ENCODE measurements at regions of chr13 and their contacts with region 1.

Region 1: DNA sequence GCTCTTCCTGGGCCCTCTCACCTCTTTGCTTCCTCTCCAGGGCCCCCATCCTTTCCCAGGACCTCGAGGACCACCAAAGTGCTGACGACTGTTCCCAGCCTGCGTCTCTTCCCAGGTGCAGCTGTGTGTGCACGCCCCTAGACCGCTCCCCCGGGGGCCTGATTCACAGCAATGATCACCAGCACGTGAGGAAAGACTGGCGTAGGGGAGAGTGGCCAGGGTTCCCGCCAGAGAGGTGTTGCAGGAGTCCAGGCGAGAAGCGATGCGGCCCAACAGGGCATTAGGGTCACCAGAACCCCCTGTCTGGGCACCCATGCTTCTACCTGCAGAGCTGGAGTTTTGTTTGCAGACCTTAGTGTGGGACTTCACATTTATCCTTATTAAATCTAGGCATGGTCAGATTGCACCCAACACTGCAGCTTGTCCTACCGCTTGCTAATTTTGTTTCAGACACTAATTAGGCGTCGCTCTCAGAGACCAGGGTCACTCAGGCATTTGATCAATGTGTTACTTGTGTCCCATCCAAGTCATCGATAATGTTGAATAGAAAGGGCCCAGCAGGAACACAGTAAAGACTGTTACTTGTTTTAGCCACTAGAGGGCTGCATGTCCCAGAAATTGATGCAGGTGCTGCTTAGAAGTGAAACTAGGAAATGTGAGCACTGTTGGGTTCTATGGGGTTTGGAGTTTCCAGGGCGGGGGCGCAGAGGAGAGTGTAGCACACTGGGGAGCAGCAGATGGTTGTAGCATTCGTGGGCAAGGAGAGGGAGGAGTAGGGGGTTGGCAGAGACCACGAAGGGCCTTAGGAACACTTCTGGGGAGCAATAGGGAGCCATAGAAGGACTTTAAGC is 53.2 kb downstream of the CDADC1 start:
- DNase-seq: peak in 8 of 9 donors; percentile 67 to 82 (median 75)
- ATAC-seq: peak; percentile 96
- H3K4me3 ChIP-seq: peak overlapping the region; percentile 67
- H3K4me3 Mint-ChIP-seq: peak overlapping the region; percentile 63 to 90 (median 80)
- H3K27ac ChIP-seq: no peak overlapping the region
- H3K27ac Mint-ChIP-seq: peak overlapping the region; percentile 16 to 82 (median 71)
- H3K4me1 ChIP-seq: no peaks in the 10 kb centered on the region
- H3K4me1 Mint-ChIP-seq: peaks cover 8 to 28% (median 14%) of the 10 kb centered on the region in 7 donors
- H3K27me3 ChIP-seq: no peaks in the 10 kb centered on the region
- H3K27me3 Mint-ChIP-seq: no peaks in the 10 kb centered on the region

Region 2: GRCh38 chr13:48222358-48223301 is 1078.3 kb before region 1 on chr13:
- CTCF ChIA-PET with region 1: no interaction called
- POLR2A ChIA-PET with region 1: no interaction called
- intact Hi-C with region 1: no loop called
- DNase-seq: peak in 2 of 9 donors; percentile 25 to 30
- ATAC-seq: peak; percentile 58
- H3K4me3 ChIP-seq: peak overlapping the region; percentile 9
- H3K4me3 Mint-ChIP-seq: peak overlapping the region; percentile 48 to 91 (median 78)
- H3K27ac ChIP-seq: peak overlapping the region; percentile 83
- H3K27ac Mint-ChIP-seq: peak overlapping the region; percentile 38 to 99 (median 97)
- H3K4me1 ChIP-seq: peaks cover 40 to 60% of the 10 kb centered on the region in 2 donors
- H3K4me1 Mint-ChIP-seq: peaks cover 41 to 88% (median 74%) of the 10 kb centered on the region in 7 donors
- H3K27me3 ChIP-seq: no peaks in the 10 kb centered on the region
- H3K27me3 Mint-ChIP-seq: peaks cover 0 to 32% (median 0%) of the 10 kb centered on the region in 5 donors

Region 3: DNA sequence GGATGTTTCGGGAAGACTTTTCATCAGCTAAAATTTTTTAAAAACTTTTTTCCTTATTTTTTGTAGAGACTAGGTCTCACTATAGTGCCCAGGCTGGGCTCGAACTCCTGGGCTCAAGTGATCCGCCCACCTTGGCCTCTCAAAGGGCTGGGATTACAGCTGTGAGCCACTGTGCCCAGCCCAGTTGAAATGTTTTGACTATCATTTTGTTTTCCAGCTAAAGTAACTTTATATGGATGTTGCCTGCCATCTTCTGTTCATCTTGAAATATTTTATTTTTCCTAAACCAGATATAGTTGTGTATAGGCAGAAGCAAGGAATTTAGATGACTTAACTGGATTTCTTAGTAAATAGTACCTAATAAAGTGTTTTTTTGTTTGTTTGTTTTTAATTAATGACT is 135.9 kb after region 1 on chr13:
- CTCF ChIA-PET with region 1: no interaction called
- POLR2A ChIA-PET with region 1: no interaction called
- intact Hi-C with region 1: loop called in 1 of 2 experiments (anchors 1 kb)
- DNase-seq: peak in 3 of 9 donors; percentile 15 to 32 (median 27)
- ATAC-seq: no peak
- H3K4me3 ChIP-seq: no peak overlapping the region
- H3K4me3 Mint-ChIP-seq: no peak overlapping the region
- H3K27ac ChIP-seq: no peak overlapping the region
- H3K27ac Mint-ChIP-seq: peak overlapping the region in 1 of 9 donors; percentile 45
- H3K4me1 ChIP-seq: no peaks in the 10 kb centered on the region
- H3K4me1 Mint-ChIP-seq: peaks cover 0 to 6% (median 0%) of the 10 kb centered on the region in 7 donors
- H3K27me3 ChIP-seq: no peaks in the 10 kb centered on the region
- H3K27me3 Mint-ChIP-seq: no peaks in the 10 kb centered on the region

Region 4: GRCh38 chr13:49511736-49512135 is 210.8 kb after region 1 on chr13:
- CTCF ChIA-PET with region 1: no interaction called
- POLR2A ChIA-PET with region 1: no interaction called
- intact Hi-C with region 1: no loop called
- DNase-seq: no peak
- ATAC-seq: no peak
- H3K4me3 ChIP-seq: no peak overlapping the region
- H3K4me3 Mint-ChIP-seq: no peak overlapping the region
- H3K27ac ChIP-seq: no peak overlapping the region
- H3K27ac Mint-ChIP-seq: peak overlapping the region in 3 of 9 donors; percentile 1 to 13 (median 11)
- H3K4me1 ChIP-seq: no peaks in the 10 kb centered on the region
- H3K4me1 Mint-ChIP-seq: peaks cover 10 to 41% (median 27%) of the 10 kb centered on the region in 7 donors
- H3K27me3 ChIP-seq: no peaks in the 10 kb centered on the region
- H3K27me3 Mint-ChIP-seq: no peaks in the 10 kb centered on the region

Region 5: GRCh38 chr13:49554393-49554792 is 253.4 kb after region 1 on chr13:
- CTCF ChIA-PET with region 1: no interaction called
- POLR2A ChIA-PET with region 1: no interaction called
- intact Hi-C with region 1: loop called in 1 of 2 experiments (anchors 1 kb)
- DNase-seq: no peak
- ATAC-seq: no peak
- H3K4me3 ChIP-seq: no peak overlapping the region
- H3K4me3 Mint-ChIP-seq: no peak overlapping the region
- H3K27ac ChIP-seq: no peak overlapping the region
- H3K27ac Mint-ChIP-seq: no peak overlapping the region
- H3K4me1 ChIP-seq: no peaks in the 10 kb centered on the region
- H3K4me1 Mint-ChIP-seq: peaks cover 0 to 4% (median 0%) of the 10 kb centered on the region in 7 donors
- H3K27me3 ChIP-seq: no peaks in the 10 kb centered on the region
- H3K27me3 Mint-ChIP-seq: no peaks in the 10 kb centered on the region

Region 6: GRCh38 chr13:49606747-49607648 is 306.0 kb after region 1 on chr13:
- CTCF ChIA-PET with region 1: interaction called, 11 read pairs
- POLR2A ChIA-PET with region 1: interaction called, 3 read pairs
- intact Hi-C with region 1: loop called (anchors 1 kb)
- DNase-seq: peak; percentile 57 to 80 (median 72)
- ATAC-seq: peak; percentile 98
- H3K4me3 ChIP-seq: peak overlapping the region; percentile 49
- H3K4me3 Mint-ChIP-seq: peak overlapping the region; percentile 62 to 92 (median 87)
- H3K27ac ChIP-seq: no peak overlapping the region
- H3K27ac Mint-ChIP-seq: peak overlapping the region in 8 of 9 donors; percentile 43 to 91 (median 75)
- H3K4me1 ChIP-seq: no peaks in the 10 kb centered on the region
- H3K4me1 Mint-ChIP-seq: peaks cover 0 to 7% (median 4%) of the 10 kb centered on the region in 7 donors
- H3K27me3 ChIP-seq: no peaks in the 10 kb centered on the region
- H3K27me3 Mint-ChIP-seq: peaks cover 0 to 5% (median 0%) of the 10 kb centered on the region in 5 donors

Region 7: DNA sequence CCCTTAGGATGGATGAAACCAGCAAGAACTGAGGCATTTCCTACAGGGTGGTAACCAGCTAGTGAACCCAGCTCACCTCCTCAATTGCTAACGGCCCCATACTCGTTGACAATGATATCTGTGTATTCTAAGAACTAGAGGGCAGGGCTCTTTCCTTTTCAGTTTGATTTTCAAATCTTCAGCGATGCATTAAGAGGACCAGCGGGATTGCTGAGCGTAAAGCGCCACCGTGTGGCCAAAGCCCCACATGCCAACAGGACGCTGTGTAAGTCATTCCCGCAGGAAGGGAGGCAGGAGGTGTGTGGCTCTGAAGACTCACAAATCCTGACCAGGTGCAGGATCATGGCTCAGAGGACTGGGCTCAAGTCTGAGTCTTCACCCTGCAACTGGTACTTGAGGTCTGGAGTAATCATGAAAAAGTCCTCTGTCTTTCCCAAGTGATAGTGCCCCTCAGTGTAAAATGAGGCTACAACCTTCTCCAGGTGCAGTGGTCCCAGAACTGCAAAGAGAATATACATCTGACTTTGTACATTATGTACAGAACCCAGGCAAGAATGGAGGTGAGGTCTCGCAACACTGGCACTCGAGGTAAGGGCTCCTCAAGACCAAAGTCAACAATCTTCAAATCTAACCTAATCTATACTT is 1769.2 kb after region 1 on chr13:
- CTCF ChIA-PET with region 1: no interaction called
- POLR2A ChIA-PET with region 1: no interaction called
- intact Hi-C with region 1: loop called (anchors 2 to 5 kb)
- DNase-seq: peak; percentile 43 to 75 (median 66)
- ATAC-seq: peak; percentile 83
- H3K4me3 ChIP-seq: no peak overlapping the region
- H3K4me3 Mint-ChIP-seq: peak overlapping the region in 2 of 10 donors; percentile 7 to 27
- H3K27ac ChIP-seq: no peak overlapping the region
- H3K27ac Mint-ChIP-seq: peak overlapping the region in 1 of 9 donors; percentile 76
- H3K4me1 ChIP-seq: no peaks in the 10 kb centered on the region
- H3K4me1 Mint-ChIP-seq: peaks cover 0 to 37% (median 7%) of the 10 kb centered on the region in 7 donors
- H3K27me3 ChIP-seq: no peaks in the 10 kb centered on the region
- H3K27me3 Mint-ChIP-seq: peaks cover 10 to 25% (median 16%) of the 10 kb centered on the region in 5 donors

Measured in naive thymus-derived CD4-positive, alpha-beta T cell (primary cell).